Head of caudate nucleus (tissue), 42 donors: ENCODE measurements at regions of chr5 and their contacts with region 1.

Region 1: GRCh38 chr5:16350816-16351215 is 114.8 kb downstream of the ZNF622 start:
- DNase-seq: no peak

Region 2: GRCh38 chr5:17720071-17720470 is 1369.3 kb after region 1 on chr5:
- intact Hi-C with region 1: loop called (anchors 10 kb)
- DNase-seq: no peak